ENCODE measurements at regions of chr7 and their contacts with region 1.

Region 1: GRCh38 chr7:96273716-96274115 is 48.2 kb downstream of the SLC25A13 start:
- DNase-seq: no peak
- ATAC-seq: no peak
- H3K4me3 ChIP-seq: no peak overlapping the region
- H3K4me3 Mint-ChIP-seq: no peak overlapping the region
- H3K27ac ChIP-seq: no peak overlapping the region
- H3K27ac Mint-ChIP-seq: no peak overlapping the region
- H3K4me1 ChIP-seq: no peaks in the 10 kb centered on the region
- H3K4me1 Mint-ChIP-seq: no peaks in the 10 kb centered on the region
- H3K27me3 ChIP-seq: no peaks in the 10 kb centered on the region
- H3K27me3 Mint-ChIP-seq: no peaks in the 10 kb centered on the region
- CTCF ChIP-seq: no peak

Region 2: DNA sequence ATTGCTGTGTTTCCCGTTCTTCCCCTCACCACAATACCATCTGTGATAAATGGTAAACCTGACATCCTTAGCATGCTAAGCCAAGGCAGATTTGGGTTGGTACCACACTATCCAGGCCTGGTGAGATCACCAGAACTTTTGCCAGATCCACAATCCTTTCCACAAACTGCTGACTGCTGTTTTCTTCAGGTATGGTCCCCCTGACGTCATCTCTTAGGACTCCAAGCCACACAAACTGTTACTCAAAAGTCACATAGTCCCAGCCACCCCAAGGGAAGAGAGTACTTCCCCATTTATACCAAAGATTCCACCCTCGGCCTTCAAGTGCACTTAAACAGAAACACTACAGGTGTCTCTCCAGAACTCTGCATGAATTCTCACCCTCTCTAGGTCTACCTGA is 13.4 kb after region 1 on chr7:
- CTCF ChIA-PET with region 1: no interaction called
- POLR2A ChIA-PET with region 1: no interaction called
- intact Hi-C with region 1: loop called (anchors 2 kb)
- DNase-seq: peak; percentile 24
- ATAC-seq: peak; percentile 36
- H3K4me3 ChIP-seq: no peak overlapping the region
- H3K4me3 Mint-ChIP-seq: no peak overlapping the region
- H3K27ac ChIP-seq: no peak overlapping the region
- H3K27ac Mint-ChIP-seq: peak overlapping the region; percentile 10
- H3K4me1 ChIP-seq: peaks cover 14 to 17% of the 10 kb centered on the region in 2 donors
- H3K4me1 Mint-ChIP-seq: peaks cover 43% of the 10 kb centered on the region
- H3K27me3 ChIP-seq: no peaks in the 10 kb centered on the region
- H3K27me3 Mint-ChIP-seq: no peaks in the 10 kb centered on the region
- CTCF ChIP-seq: no peak

Measured in B cell (primary cell).